Prostate gland (tissue), 2 donors: ENCODE measurements at regions of chr2 and their contacts with region 1.

Region 1: DNA sequence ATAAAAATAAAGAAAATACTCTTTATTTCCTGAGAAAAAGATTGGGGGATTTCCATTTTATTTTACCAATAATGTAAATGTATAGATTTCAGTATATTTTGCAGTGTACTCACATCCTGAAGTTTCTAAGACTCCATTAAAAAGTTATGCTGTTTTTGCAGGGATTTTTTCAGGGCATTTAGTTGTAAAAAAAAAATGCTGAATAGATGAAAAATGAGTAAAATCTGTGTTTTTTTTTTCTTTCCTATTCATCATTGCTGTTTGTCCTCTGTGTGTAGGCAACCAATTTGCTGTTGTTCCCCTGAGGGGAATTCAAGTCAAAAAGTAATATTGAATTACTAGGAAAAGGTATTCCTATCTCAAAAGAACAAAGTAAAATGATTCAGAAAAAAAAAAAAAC is 66.3 kb downstream of the MEIS1 start:
- DNase-seq: no peak
- H3K4me3 ChIP-seq: no peak overlapping the region
- H3K27ac ChIP-seq: no peak overlapping the region
- H3K4me1 ChIP-seq: peaks cover 3% of the 10 kb centered on the region
- H3K27me3 ChIP-seq: no peaks in the 10 kb centered on the region
- CTCF ChIP-seq: no peak
- POLR2A ChIP-seq: no peak

Region 2: GRCh38 chr2:66536997-66537396 is 35.7 kb after region 1 on chr2:
- intact Hi-C with region 1: loop called (anchors 5 kb)
- DNase-seq: no peak
- H3K4me3 ChIP-seq: no peak overlapping the region
- H3K27ac ChIP-seq: no peak overlapping the region
- H3K4me1 ChIP-seq: no peaks in the 10 kb centered on the region
- H3K27me3 ChIP-seq: no peaks in the 10 kb centered on the region
- CTCF ChIP-seq: no peak
- POLR2A ChIP-seq: no peak